ENCODE measurements at regions of chr19 and their contacts with region 1.

Region 1: GRCh38 chr19:16771618-16772017 is 52.0 kb downstream of the NWD1 start:
- DNase-seq: peak; percentile 50 to 80
- ATAC-seq: peak; percentile 67 to 89 (median 84)
- H3K4me3 ChIP-seq: no peak overlapping the region
- H3K27ac ChIP-seq: no peak overlapping the region
- H3K4me1 ChIP-seq: no peaks in the 10 kb centered on the region
- H3K27me3 ChIP-seq: peaks cover 0 to 3% (median 0%) of the 10 kb centered on the region in 7 donors
- CTCF ChIP-seq: peak; percentile 75 to 91 (median 83)

Region 2: DNA sequence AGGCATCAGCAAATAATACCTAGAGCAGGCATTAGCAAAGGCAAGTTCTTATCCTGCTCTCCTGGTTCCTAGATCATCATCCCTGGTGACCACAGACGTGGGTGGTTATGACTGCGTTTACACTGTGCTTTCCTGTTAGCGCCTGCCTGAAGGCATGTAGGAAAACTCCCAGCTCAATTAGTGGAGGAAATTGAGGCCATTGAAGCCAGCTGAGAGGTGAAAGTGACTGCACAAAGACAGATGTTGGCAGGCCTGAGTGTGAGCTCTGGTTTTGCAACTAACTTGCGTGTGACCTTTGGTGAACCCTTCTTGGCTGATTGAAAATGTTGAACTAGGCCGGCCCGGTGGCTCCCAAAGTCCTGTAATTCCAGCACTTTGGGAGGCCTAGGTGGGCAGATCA is 69.5 kb before region 1 on chr19:
- intact Hi-C with region 1: no loop called
- DNase-seq: peak; percentile 23 to 68
- ATAC-seq: peak; percentile 68 to 91 (median 83)
- H3K4me3 ChIP-seq: no peak overlapping the region
- H3K27ac ChIP-seq: peak overlapping the region in 9 of 10 donors; percentile 15 to 74 (median 46)
- H3K4me1 ChIP-seq: peaks cover 0 to 38% (median 10%) of the 10 kb centered on the region in 9 donors
- H3K27me3 ChIP-seq: no peaks in the 10 kb centered on the region
- CTCF ChIP-seq: no peak

Region 3: DNA sequence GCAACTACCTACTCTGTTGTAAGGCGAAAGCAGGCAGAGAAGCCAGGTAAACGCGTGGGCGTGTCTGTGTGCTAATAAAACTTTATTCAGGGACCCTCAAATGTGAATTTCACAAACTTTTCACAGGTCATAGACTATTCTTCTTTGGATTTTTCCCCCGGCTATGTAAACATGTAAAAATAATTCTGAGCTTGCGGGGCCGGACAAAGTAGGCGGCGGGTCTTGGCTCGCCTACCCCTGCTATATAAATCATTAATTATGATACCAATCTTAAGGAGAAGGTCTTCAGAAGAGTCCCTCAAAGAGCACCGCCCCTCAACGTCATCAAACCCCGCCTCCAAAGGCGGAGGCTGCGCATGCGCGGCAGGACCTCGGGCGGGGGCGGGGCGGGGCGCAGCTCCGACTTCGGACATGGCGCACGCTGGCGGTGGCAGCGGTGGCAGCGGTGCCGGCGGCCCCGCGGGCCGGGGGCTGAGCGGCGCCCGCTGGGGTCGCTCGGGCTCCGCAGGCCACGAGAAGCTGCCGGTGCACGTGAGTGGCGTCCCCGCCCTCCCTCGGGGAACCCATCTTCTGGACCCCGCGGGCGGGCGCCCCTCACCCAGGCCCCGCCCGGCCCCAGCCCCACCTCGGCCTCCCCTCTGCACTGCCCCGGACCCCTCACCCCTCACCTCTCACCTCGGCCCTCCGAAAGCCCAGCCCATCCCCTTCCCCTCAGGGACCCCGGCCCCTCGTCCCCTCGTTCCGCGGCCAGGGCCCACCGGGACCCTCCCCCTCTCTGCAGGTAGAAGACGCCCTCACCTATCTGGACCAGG is 57.6 kb after region 1 on chr19 and contains the start of gene SIN3B:
- intact Hi-C with region 1: loop called in 2 of 10 experiments (anchors 5 to 10 kb)
- DNase-seq: peak; percentile 82 to 88
- ATAC-seq: peak; percentile 83 to 95 (median 90)
- H3K4me3 ChIP-seq: peak within 1 kb of the TSS; percentile 59 to 87 (median 80)
- H3K27ac ChIP-seq: peak within 1 kb of the TSS; percentile 72 to 89 (median 80)
- H3K4me1 ChIP-seq: peaks cover 12 to 52% (median 30%) of the 10 kb centered on the region in 9 donors
- H3K27me3 ChIP-seq: peaks cover 0 to 5% (median 0%) of the 10 kb centered on the region in 7 donors
- CTCF ChIP-seq: peak in 1 of 9 donors; percentile 8
- total RNA-seq, gene SIN3B: 22.9 to 30.6 (median 24.8) TPM

Region 4: GRCh38 chr19:16888629-16889365 is 117.2 kb after region 1 on chr19 and contains the start of gene F2RL3:
- intact Hi-C with region 1: loop called in 1 of 10 experiments (anchors 10 kb)
- DNase-seq: peak; percentile 58 to 59
- ATAC-seq: peak; percentile 9 to 71 (median 54)
- H3K4me3 ChIP-seq: peak within 1 kb of the TSS; percentile 16 to 43 (median 32)
- H3K27ac ChIP-seq: peak within 1 kb of the TSS; percentile 29 to 87 (median 80)
- H3K4me1 ChIP-seq: peaks cover 2 to 50% (median 43%) of the 10 kb centered on the region in 9 donors
- H3K27me3 ChIP-seq: peaks cover 0 to 28% (median 0%) of the 10 kb centered on the region in 7 donors
- CTCF ChIP-seq: no peak
- total RNA-seq, gene F2RL3: 0.13 to 8.3 (median 1.1) TPM

Region 5: DNA sequence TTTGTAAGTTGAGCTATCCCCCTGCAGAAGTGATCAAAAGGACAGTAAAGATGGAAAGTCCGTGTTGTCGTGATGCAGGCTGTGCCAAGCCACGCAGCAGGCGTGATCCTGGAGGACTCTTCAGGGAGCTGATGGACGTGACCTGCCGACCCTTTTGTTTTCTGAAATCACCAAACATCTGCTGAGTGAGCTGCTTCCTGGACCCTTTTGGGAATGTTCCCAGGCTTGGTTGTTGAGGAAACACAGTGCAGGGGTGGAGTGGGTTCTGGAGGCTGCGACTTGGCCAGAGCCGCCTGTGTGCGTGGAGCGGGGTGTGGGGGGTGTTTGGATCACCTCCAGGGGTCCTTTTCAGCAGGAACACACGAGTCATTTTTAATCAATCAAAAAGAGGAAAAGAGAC is 270.4 kb after region 1 on chr19:
- intact Hi-C with region 1: loop called in 1 of 10 experiments (anchors 2 kb)
- DNase-seq: peak; percentile 54 to 70
- ATAC-seq: peak; percentile 73 to 95 (median 91)
- H3K4me3 ChIP-seq: no peak overlapping the region
- H3K27ac ChIP-seq: peak overlapping the region in 8 of 10 donors; percentile 34 to 75 (median 58)
- H3K4me1 ChIP-seq: peaks cover 0 to 16% (median 0%) of the 10 kb centered on the region in 9 donors
- H3K27me3 ChIP-seq: peaks cover 0 to 21% (median 7%) of the 10 kb centered on the region in 7 donors
- CTCF ChIP-seq: no peak

Region 6: DNA sequence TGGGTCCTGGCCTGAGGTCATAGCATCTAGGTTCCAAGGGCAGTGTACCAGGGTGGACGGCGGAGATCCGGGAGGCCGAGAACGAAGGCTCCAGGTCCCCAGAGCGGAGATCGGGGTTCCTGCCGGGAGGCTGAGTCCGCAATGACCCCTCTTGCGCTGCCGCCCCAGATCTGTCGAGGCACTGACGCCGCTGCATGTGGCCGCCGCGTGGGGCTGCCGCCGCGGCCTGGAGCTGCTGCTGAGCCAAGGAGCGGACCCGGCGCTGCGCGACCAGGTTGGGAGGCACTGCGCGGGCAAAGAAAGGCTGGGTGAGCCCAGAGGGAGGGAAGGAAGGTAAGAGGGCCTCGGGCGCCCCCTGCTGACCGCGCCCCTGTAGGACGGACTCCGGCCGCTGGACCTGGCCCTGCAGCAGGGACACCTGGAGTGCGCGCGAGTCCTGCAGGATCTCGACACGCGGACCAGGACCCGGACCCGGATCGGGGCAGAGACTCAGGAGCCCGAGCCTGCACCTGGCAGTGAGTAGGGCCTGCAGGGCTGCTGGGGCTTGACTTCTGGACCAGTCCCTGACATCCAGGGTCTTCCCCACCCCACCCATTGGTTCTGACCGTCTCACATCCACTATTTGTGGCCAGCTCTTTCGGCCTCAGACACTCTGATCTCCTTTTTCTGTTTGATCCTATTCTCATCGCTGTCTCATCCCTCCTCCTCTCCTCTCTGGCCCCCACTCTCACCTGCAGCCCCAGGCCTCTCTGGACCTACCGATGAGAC is 511.1 kb after region 1 on chr19:
- intact Hi-C with region 1: loop called in 3 of 10 experiments (anchors 10 kb)
- DNase-seq: peak; percentile 78 to 86
- ATAC-seq: peak; percentile 89 to 97 (median 94)
- H3K4me3 ChIP-seq: peak overlapping the region; percentile 6 to 56 (median 42)
- H3K27ac ChIP-seq: no peak overlapping the region
- H3K4me1 ChIP-seq: peaks cover 13 to 19% (median 16%) of the 10 kb centered on the region in 9 donors
- H3K27me3 ChIP-seq: peaks cover 11 to 21% (median 16%) of the 10 kb centered on the region in 7 donors
- CTCF ChIP-seq: peak; percentile 89 to 98 (median 95)

Measured in heart right ventricle (tissue), 16 donors.